Activated naive CD4-positive, alpha-beta T cell treated with anti-CD3 and anti-CD28 coated beads, Interleukin-2, amount 10 ng/mL, durations not matched to agents 7 days and 5 days (primary cell): ENCODE measurements at regions of chr17 and their contacts with region 1.

Region 1: GRCh38 chr17:33725675-33726271 is 432.7 kb upstream of the ASIC2 start:
- DNase-seq: peak; percentile 45
- H3K4me3 Mint-ChIP-seq: no peak overlapping the region
- H3K27ac Mint-ChIP-seq: no peak overlapping the region
- H3K4me1 Mint-ChIP-seq: no peaks in the 10 kb centered on the region
- H3K27me3 Mint-ChIP-seq: peaks cover 4% of the 10 kb centered on the region

Region 2: DNA sequence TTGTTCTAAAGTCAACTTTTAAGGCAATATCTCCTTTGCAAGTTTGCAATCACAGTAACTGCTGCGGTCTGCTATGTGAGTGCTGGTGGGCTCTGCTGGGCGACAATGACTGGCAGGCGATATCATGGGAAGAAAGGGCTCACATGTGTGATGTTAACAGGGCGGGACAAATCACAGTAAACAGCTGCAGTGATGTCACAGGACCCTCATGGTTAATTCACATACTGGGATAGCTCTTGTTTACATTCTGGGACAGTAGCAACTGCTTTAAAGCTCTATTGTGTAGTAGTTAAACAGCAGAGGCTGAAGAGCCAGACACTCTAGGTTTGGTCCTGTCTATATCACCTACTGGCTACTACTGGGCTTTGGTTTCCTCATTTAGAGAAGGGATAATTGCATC is 175.5 kb before region 1 on chr17:
- CTCF ChIA-PET with region 1: no interaction called
- DNase-seq: no peak
- H3K4me3 Mint-ChIP-seq: no peak overlapping the region
- H3K27ac Mint-ChIP-seq: no peak overlapping the region
- H3K4me1 Mint-ChIP-seq: no peaks in the 10 kb centered on the region
- H3K27me3 Mint-ChIP-seq: no peaks in the 10 kb centered on the region

Region 3: GRCh38 chr17:33704856-33705255 is 20.9 kb before region 1 on chr17:
- CTCF ChIA-PET with region 1: no interaction called
- DNase-seq: no peak
- H3K4me3 Mint-ChIP-seq: no peak overlapping the region
- H3K27ac Mint-ChIP-seq: no peak overlapping the region
- H3K4me1 Mint-ChIP-seq: no peaks in the 10 kb centered on the region
- H3K27me3 Mint-ChIP-seq: peaks cover 4% of the 10 kb centered on the region

Region 4: DNA sequence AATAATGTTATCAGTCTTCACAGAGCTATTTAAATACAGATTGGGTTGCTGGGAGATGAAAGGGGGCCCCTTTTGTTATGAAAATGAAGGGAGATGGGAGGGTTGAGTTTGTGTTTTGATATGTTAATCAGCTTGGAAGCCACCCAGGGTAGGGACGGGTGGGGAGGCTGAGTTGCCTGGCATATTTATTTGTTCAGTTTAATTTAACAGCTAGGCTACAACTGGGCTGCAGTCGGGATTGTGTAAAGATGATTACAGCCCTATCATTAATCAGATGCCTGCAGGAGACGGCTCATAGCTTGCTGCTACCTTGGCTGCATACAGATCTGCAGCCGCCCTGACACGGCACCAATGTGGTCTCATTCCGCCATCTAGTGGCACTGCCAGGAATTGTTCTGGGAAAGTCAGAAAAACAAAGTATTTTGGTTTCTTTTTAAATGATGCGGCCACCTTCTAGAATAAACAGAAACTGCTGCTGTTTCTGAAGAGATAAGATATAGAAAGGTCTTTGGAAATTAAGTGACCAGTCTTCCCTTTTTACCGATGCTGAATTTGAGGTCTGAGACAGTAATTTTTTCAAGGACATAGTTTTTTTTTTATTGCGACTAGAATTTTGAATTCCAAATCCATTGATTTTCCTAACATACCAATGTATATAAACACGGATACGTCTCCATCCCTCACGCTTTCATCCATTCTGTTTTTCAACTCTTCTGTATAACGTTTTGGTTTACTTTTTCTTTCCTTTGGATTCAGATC is 25.3 kb after region 1 on chr17:
- CTCF ChIA-PET with region 1: interaction called, 16 read pairs
- DNase-seq: peak; percentile 81
- H3K4me3 Mint-ChIP-seq: peak overlapping the region; percentile 10
- H3K27ac Mint-ChIP-seq: no peak overlapping the region
- H3K4me1 Mint-ChIP-seq: peaks cover 3% of the 10 kb centered on the region
- H3K27me3 Mint-ChIP-seq: peaks cover 13% of the 10 kb centered on the region